ENCODE measurements at regions of chrX and their contacts with region 1.

Region 1: DNA sequence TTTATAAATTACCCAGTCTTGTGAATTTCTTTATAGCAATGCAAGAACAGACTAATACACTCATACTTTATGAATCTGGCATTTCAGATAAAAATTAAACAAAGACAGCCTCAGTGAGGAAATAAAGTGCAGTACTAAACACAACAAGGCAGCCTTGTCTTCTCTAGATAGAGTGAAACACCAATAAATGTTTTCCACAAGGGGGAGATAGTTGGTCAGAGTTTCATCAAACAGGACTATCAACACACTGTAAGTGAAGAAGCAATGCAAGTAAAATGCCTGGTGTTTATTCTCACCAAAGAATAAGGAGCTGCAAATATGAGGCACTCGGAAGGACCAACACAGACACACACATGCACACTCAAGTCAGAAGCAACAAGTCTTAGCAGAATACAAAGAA is 62.8 kb downstream of the FAM9B start:
- DNase-seq: peak; percentile 67
- H3K4me3 Mint-ChIP-seq: no peak overlapping the region
- H3K27ac Mint-ChIP-seq: no peak overlapping the region
- H3K4me1 Mint-ChIP-seq: no peaks in the 10 kb centered on the region
- H3K27me3 Mint-ChIP-seq: no peaks in the 10 kb centered on the region
- CTCF ChIP-seq: peak; percentile 31

Region 2: GRCh38 chrX:9023293-9023692 is 52.2 kb after region 1 on chrX:
- CTCF ChIA-PET with region 1: no interaction called
- POLR2A ChIA-PET with region 1: no interaction called
- intact Hi-C with region 1: no loop called
- DNase-seq: no peak
- H3K4me3 Mint-ChIP-seq: no peak overlapping the region
- H3K27ac Mint-ChIP-seq: no peak overlapping the region
- H3K4me1 Mint-ChIP-seq: no peaks in the 10 kb centered on the region
- H3K27me3 Mint-ChIP-seq: no peaks in the 10 kb centered on the region
- CTCF ChIP-seq: no peak

Region 3: GRCh38 chrX:9163214-9163681 is 192.1 kb after region 1 on chrX:
- CTCF ChIA-PET with region 1: no interaction called
- POLR2A ChIA-PET with region 1: interaction called, 3 read pairs
- intact Hi-C with region 1: loop called (anchors 1 kb)
- DNase-seq: peak; percentile 49
- H3K4me3 Mint-ChIP-seq: peak overlapping the region; percentile 64
- H3K27ac Mint-ChIP-seq: peak overlapping the region; percentile 44
- H3K4me1 Mint-ChIP-seq: peaks cover 10% of the 10 kb centered on the region
- H3K27me3 Mint-ChIP-seq: no peaks in the 10 kb centered on the region
- CTCF ChIP-seq: no peak

Region 4: GRCh38 chrX:9189286-9189685 is 218.2 kb after region 1 on chrX:
- CTCF ChIA-PET with region 1: no interaction called
- POLR2A ChIA-PET with region 1: no interaction called
- intact Hi-C with region 1: no loop called
- DNase-seq: no peak
- H3K4me3 Mint-ChIP-seq: no peak overlapping the region
- H3K27ac Mint-ChIP-seq: no peak overlapping the region
- H3K4me1 Mint-ChIP-seq: peaks cover 8% of the 10 kb centered on the region
- H3K27me3 Mint-ChIP-seq: no peaks in the 10 kb centered on the region
- CTCF ChIP-seq: no peak